Posterior vena cava (tissue), 2 donors: ENCODE measurements at regions of chr10 and their contacts with region 1.

Region 1: GRCh38 chr10:98293560-98294269 is 25.7 kb upstream of the LOXL4 start:
- DNase-seq: no peak

Region 2: DNA sequence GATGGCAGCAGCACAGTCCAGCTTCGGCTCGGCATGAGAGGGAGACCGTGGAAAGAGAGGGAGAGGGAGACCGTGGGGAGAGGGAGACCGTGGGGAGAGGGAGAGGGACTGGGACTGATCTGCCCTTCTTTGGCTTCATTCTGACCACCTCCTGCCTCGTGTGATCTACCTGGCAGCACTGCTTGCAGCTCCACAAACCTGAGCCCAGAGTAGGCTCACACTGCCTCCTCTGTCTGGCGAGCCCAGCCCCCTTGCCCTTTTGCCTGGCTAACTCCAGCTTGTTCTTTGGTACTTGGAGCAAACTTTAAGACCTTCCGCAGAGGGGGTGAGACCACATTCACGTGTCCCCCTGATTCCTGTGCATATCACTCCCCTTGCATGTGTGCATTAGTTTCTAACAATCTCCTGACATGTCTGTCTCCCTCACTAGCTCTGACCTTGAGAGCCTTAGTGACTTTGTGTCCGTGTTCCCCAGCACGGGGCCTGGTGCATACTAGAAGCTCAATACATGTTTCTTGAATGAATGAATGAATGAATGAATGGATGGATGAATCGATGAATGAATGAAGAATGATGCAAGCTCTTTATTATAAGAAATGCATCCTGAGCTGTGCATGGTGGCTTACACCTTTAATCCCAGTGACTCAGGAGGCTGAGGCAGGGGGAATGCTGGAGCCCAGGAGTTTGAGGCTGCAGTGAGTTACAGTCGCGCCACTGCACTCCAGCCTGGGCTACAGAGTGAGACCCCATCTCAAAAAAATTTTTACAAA is 763.8 kb before region 1 on chr10:
- intact Hi-C with region 1: loop called in 1 of 2 experiments (anchors 5 kb)
- DNase-seq: no peak